ENCODE measurements at regions of chr13 and their contacts with region 1.

Region 1: GRCh38 chr13:87570669-87571068 is 100.5 kb upstream of the SLITRK5 start:
- DNase-seq: no peak
- H3K4me3 ChIP-seq: no peak overlapping the region
- H3K4me3 Mint-ChIP-seq: no peak overlapping the region
- H3K27ac ChIP-seq: no peak overlapping the region
- H3K27ac Mint-ChIP-seq: no peak overlapping the region
- H3K4me1 ChIP-seq: no peaks in the 10 kb centered on the region
- H3K4me1 Mint-ChIP-seq: no peaks in the 10 kb centered on the region
- H3K27me3 ChIP-seq: no peaks in the 10 kb centered on the region
- H3K27me3 Mint-ChIP-seq: no peaks in the 10 kb centered on the region

Region 2: DNA sequence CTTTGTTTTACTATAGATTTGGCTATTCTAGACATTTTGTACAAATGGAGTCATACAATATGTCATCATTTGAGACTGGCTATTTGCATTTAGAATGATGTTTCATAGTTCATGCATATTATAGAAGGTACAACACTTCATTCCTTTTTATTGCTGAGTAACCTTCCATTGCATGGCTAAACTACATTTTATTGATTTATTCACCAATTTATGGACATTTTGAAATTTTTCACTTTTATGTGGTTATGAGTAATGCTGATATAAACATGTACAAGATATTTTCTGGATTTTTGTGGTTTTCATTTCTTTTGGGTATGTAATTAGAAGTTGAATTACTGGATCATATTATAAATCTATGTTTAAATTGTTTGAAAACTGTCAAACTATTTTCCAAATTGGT is 609.8 kb before region 1 on chr13:
- CTCF ChIA-PET with region 1: no interaction called
- POLR2A ChIA-PET with region 1: no interaction called
- intact Hi-C with region 1: no loop called
- DNase-seq: no peak
- H3K4me3 ChIP-seq: no peak overlapping the region
- H3K4me3 Mint-ChIP-seq: no peak overlapping the region
- H3K27ac ChIP-seq: no peak overlapping the region
- H3K27ac Mint-ChIP-seq: no peak overlapping the region
- H3K4me1 ChIP-seq: no peaks in the 10 kb centered on the region
- H3K4me1 Mint-ChIP-seq: no peaks in the 10 kb centered on the region
- H3K27me3 ChIP-seq: no peaks in the 10 kb centered on the region
- H3K27me3 Mint-ChIP-seq: no peaks in the 10 kb centered on the region

Region 3: DNA sequence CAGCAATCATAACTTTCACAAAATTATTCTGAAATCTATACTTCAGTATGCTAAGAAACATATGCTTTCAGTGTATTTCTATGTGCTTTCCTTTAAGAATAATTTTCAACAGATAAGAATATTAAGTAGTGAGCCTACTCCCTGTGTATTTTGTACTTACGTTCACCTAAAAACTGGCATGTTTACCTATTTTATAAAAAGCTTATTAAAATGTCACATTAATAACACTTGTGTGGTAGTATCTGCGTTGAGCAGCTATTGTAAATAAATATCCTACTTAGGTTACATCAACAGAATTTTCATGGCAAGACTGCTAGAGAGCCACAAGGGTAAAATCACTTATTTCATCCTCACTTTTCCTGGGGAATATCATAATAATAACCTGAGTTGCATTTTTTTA is 12.9 kb before region 1 on chr13:
- CTCF ChIA-PET with region 1: no interaction called
- POLR2A ChIA-PET with region 1: no interaction called
- intact Hi-C with region 1: loop called (anchors 1 kb)
- DNase-seq: no peak
- H3K4me3 ChIP-seq: no peak overlapping the region
- H3K4me3 Mint-ChIP-seq: no peak overlapping the region
- H3K27ac ChIP-seq: no peak overlapping the region
- H3K27ac Mint-ChIP-seq: no peak overlapping the region
- H3K4me1 ChIP-seq: no peaks in the 10 kb centered on the region
- H3K4me1 Mint-ChIP-seq: no peaks in the 10 kb centered on the region
- H3K27me3 ChIP-seq: no peaks in the 10 kb centered on the region
- H3K27me3 Mint-ChIP-seq: no peaks in the 10 kb centered on the region

Region 4: DNA sequence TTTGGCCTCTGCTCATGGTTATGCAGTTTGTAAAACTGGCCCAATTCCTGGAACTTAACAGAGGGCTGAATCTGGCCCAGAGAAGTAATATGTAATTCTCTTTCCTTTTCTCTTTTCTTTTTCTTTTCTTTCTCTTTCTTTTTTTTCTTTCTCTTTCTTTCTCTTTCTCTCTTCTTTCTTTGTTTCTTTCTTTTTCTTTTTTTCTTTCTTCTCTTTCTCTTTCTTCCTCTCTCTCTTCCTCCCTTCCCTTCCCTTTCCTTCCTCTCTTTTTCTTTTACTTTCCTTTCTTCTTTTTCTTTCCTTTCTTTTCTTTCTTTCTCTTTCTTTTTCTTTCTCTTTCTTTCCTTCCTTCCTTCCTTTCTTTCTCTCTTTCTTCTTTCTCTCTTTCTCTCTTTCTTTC is 11.7 kb after region 1 on chr13:
- CTCF ChIA-PET with region 1: no interaction called
- POLR2A ChIA-PET with region 1: no interaction called
- intact Hi-C with region 1: no loop called
- DNase-seq: no peak
- H3K4me3 ChIP-seq: no peak overlapping the region
- H3K4me3 Mint-ChIP-seq: no peak overlapping the region
- H3K27ac ChIP-seq: no peak overlapping the region
- H3K27ac Mint-ChIP-seq: peak overlapping the region in 1 of 7 donors; percentile 32
- H3K4me1 ChIP-seq: no peaks in the 10 kb centered on the region
- H3K4me1 Mint-ChIP-seq: no peaks in the 10 kb centered on the region
- H3K27me3 ChIP-seq: no peaks in the 10 kb centered on the region
- H3K27me3 Mint-ChIP-seq: no peaks in the 10 kb centered on the region

Region 5: GRCh38 chr13:87677496-87678371 is 107.1 kb after region 1 on chr13:
- CTCF ChIA-PET with region 1: no interaction called
- POLR2A ChIA-PET with region 1: no interaction called
- intact Hi-C with region 1: no loop called
- DNase-seq: peak in 2 of 5 donors; percentile 23 to 43
- H3K4me3 ChIP-seq: no peak overlapping the region
- H3K4me3 Mint-ChIP-seq: peak overlapping the region; percentile 45 to 84 (median 74)
- H3K27ac ChIP-seq: no peak overlapping the region
- H3K27ac Mint-ChIP-seq: no peak overlapping the region
- H3K4me1 ChIP-seq: no peaks in the 10 kb centered on the region
- H3K4me1 Mint-ChIP-seq: peaks cover 0 to 38% (median 16%) of the 10 kb centered on the region in 4 donors
- H3K27me3 ChIP-seq: peaks cover 6% of the 10 kb centered on the region
- H3K27me3 Mint-ChIP-seq: peaks cover 25 to 40% of the 10 kb centered on the region in 2 donors

Region 6: DNA sequence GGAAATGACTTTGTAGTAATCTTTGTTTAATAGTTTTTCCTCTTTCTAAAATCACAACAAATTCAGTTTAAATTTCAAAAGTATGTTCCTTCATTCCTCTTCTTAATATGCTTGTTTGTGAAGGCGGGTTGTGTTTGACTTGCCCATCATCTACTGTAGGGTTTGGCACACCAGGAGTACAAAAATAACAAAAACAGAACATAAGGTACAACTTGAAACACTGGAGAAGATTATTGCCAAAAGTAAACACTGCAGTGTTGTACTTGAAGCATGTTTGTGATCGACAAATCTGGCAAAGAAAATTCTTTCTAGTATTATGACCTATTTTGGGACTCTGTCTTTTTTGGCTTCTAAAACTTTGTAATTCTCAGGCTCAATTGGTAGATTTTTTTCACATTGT is 619.1 kb after region 1 on chr13:
- CTCF ChIA-PET with region 1: no interaction called
- POLR2A ChIA-PET with region 1: no interaction called
- intact Hi-C with region 1: no loop called
- DNase-seq: no peak
- H3K4me3 ChIP-seq: no peak overlapping the region
- H3K4me3 Mint-ChIP-seq: no peak overlapping the region
- H3K27ac ChIP-seq: no peak overlapping the region
- H3K27ac Mint-ChIP-seq: no peak overlapping the region
- H3K4me1 ChIP-seq: no peaks in the 10 kb centered on the region
- H3K4me1 Mint-ChIP-seq: no peaks in the 10 kb centered on the region
- H3K27me3 ChIP-seq: no peaks in the 10 kb centered on the region
- H3K27me3 Mint-ChIP-seq: no peaks in the 10 kb centered on the region